Sigmoid colon (tissue), 7 donors: ENCODE measurements at regions of chr7 and their contacts with region 1.

Region 1: GRCh38 chr7:30564243-30564892 is 30.3 kb upstream of the GARS1 start:
- DNase-seq: peak; percentile 89
- H3K4me3 ChIP-seq: no peak overlapping the region
- H3K27ac ChIP-seq: no peak overlapping the region
- H3K4me1 ChIP-seq: no peaks in the 10 kb centered on the region
- H3K27me3 ChIP-seq: no peaks in the 10 kb centered on the region
- CTCF ChIP-seq: peak; percentile 67 to 80 (median 76)
- EP300 ChIP-seq: no peak
- POLR2A ChIP-seq: no peak

Region 2: DNA sequence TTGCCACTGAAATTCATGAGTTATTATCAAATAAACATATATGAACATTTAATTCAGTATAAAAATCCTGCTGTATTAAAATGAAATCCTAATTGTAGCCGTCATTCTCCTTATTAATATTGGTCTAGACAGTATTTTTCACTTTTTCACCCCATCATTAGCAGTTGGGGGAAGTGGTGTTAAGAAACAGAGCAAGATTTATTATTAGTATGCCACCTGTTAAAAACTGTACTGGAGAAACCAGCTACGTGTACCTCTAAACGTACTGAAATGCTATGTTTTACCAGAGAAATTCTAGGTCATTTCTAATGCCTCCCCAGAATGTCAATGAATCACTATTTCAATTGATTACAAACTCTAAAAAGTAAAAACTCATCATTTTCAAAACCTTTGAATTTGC is 289.7 kb before region 1 on chr7:
- intact Hi-C with region 1: loop called (anchors 2 kb)
- DNase-seq: no peak
- H3K4me3 ChIP-seq: no peak overlapping the region
- H3K27ac ChIP-seq: no peak overlapping the region
- H3K4me1 ChIP-seq: no peaks in the 10 kb centered on the region
- H3K27me3 ChIP-seq: no peaks in the 10 kb centered on the region
- CTCF ChIP-seq: no peak
- EP300 ChIP-seq: no peak
- POLR2A ChIP-seq: no peak

Region 3: GRCh38 chr7:30510124-30511075 is 54.0 kb before region 1 on chr7:
- intact Hi-C with region 1: loop called (anchors 5 kb)
- DNase-seq: no peak
- H3K4me3 ChIP-seq: no peak overlapping the region
- H3K27ac ChIP-seq: no peak overlapping the region
- H3K4me1 ChIP-seq: peaks cover 0 to 2% (median 0%) of the 10 kb centered on the region in 4 donors
- H3K27me3 ChIP-seq: no peaks in the 10 kb centered on the region
- CTCF ChIP-seq: peak; percentile 25 to 79 (median 72)
- EP300 ChIP-seq: no peak
- POLR2A ChIP-seq: no peak